ENCODE measurements at regions of chr3 and their contacts with region 1.

Region 1: DNA sequence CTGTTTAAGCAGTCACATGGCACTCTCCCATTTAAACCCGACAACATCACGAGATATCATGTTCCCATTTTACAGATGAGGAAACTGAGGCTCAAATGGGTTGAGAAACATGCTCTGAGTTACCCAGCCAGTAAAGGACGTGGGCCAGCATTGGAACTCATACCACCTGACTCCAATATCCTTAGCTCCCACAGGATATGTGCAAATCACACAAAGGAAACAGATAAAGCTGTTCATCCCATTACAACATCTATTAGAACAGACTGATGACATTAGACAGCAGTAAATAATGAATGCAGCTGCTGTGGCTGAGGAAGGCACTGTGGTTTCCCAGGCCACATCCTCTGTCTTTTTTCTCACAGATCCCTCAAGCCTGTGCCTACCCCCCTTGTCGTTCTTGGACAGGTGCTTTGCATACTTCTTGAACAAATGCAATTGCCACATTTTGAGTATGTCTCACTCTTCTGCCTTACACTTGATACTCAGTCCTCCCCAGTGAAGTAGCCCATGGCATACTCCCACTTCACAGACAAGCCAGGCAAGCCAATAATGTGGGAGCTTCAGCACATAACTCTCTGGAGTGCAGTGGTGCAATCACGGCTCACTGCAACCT is 17.7 kb downstream of the FRMD4B start:
- DNase-seq: peak; percentile 41
- H3K4me3 Mint-ChIP-seq: no peak overlapping the region
- H3K27ac Mint-ChIP-seq: peak overlapping the region; percentile 98
- H3K4me1 Mint-ChIP-seq: peaks cover 44% of the 10 kb centered on the region
- H3K27me3 Mint-ChIP-seq: no peaks in the 10 kb centered on the region
- CTCF ChIP-seq: no peak

Region 2: GRCh38 chr3:69250014-69250413 is 118.2 kb before region 1 on chr3:
- CTCF ChIA-PET with region 1: no interaction called
- POLR2A ChIA-PET with region 1: no interaction called
- intact Hi-C with region 1: no loop called
- DNase-seq: no peak
- H3K4me3 Mint-ChIP-seq: no peak overlapping the region
- H3K27ac Mint-ChIP-seq: no peak overlapping the region
- H3K4me1 Mint-ChIP-seq: no peaks in the 10 kb centered on the region
- H3K27me3 Mint-ChIP-seq: no peaks in the 10 kb centered on the region
- CTCF ChIP-seq: no peak

Region 3: DNA sequence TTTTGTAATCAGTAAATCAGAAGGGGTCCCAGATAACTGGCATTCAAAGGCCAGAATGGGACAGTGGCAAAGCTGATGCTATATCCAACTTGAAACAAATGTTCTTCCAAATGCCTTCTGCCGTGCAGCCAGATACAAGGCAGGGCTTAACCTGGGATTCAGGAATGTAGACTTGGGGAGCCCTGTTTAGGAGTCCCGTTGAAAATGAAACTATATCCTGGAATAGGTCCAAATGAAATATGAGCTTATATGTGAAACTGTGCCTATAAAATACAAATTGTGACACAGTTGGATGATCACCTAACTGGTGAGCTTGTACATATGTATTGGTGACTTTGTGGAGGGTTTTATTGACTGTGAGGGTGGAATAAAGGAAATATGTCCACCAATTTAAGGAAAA is 11.0 kb before region 1 on chr3:
- CTCF ChIA-PET with region 1: interaction called, 3 read pairs
- POLR2A ChIA-PET with region 1: interaction called, 11 read pairs
- intact Hi-C with region 1: no loop called
- DNase-seq: peak; percentile 63
- H3K4me3 Mint-ChIP-seq: peak overlapping the region; percentile 34
- H3K27ac Mint-ChIP-seq: peak overlapping the region; percentile 44
- H3K4me1 Mint-ChIP-seq: peaks cover 37% of the 10 kb centered on the region
- H3K27me3 Mint-ChIP-seq: no peaks in the 10 kb centered on the region
- CTCF ChIP-seq: no peak

Region 4: DNA sequence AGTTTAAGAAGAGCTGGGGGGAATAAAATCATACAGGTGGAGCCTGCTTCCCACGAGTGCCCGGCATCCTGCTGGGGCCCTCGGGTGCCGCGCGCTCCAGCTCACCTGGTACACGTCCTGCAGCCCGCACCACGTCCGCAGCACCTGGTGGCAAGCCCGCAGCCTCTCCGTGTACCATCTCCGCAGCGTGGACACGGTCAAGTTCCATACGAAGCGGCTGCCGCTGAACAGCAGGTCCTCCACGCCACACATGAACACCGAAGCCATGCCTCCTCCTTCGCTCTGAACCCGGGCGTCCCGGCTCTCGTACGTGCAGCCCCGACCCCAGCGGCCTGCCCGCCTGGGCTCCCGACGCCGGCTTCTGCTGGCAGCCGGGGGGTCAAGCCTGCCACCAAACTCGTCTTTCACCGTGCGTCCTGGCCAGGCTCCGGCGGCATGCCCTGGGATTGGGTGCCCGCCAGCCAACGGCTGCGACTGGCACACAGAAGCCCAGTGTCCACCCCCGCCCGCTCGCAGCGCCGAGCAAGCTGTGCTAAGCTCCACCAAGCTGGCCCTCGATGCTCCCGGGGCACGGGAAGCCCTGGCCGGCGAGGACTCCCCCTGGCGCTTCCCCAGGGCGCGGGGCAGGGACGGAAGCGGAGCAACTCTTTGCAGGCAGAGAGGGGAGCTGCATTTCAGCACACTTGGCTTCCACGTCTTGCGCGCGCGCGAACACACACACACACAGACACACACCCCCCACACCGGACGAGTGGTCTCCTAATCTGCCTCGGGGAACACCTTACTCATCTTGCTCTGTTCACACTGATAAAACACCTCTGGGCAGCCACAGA is 17.7 kb after region 1 on chr3 and contains the start of gene FRMD4B:
- CTCF ChIA-PET with region 1: interaction called, 11 read pairs
- POLR2A ChIA-PET with region 1: interaction called, 34 read pairs
- intact Hi-C with region 1: no loop called
- DNase-seq: peak; percentile 66
- H3K4me3 Mint-ChIP-seq: peak within 1 kb of the TSS; percentile 80
- H3K27ac Mint-ChIP-seq: peak within 1 kb of the TSS; percentile 75
- H3K4me1 Mint-ChIP-seq: peaks cover 23% of the 10 kb centered on the region
- H3K27me3 Mint-ChIP-seq: no peaks in the 10 kb centered on the region
- CTCF ChIP-seq: peak; percentile 33
- total RNA-seq, gene FRMD4B: 39.0 and 51.9 TPM in 2 replicates

Region 5: DNA sequence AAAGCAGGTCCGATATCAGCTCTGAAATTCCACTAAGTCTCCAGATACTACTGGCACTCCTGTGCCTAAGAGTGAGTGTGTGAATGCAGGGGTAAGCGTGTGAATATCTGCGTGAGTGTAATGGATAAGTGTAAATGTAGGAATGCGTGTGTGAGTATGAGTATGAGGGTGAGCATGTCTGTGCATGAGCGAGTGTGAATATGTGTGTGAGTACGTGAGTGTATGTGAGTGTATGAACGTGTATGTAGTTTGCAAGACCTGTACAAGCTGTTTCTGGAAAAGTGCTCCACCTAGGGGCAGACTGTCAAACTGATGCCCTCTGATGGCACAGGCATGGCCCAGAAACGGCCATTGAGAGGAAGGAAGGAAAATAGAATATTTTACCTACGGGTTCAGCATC is 42.0 kb after region 1 on chr3:
- CTCF ChIA-PET with region 1: interaction called, 13 read pairs
- POLR2A ChIA-PET with region 1: interaction called, 7 read pairs
- intact Hi-C with region 1: no loop called
- DNase-seq: peak; percentile 81
- H3K4me3 Mint-ChIP-seq: no peak overlapping the region
- H3K27ac Mint-ChIP-seq: no peak overlapping the region
- H3K4me1 Mint-ChIP-seq: peaks cover 13% of the 10 kb centered on the region
- H3K27me3 Mint-ChIP-seq: no peaks in the 10 kb centered on the region
- CTCF ChIP-seq: peak; percentile 66

Measured in MCF 10A (cell line).